Dorsolateral prefrontal cortex (tissue), 120 donors: ENCODE measurements at regions of chr1 and their contacts with region 1.

Region 1: GRCh38 chr1:84133479-84133878 is 10.6 kb upstream of the PRKACB start:
- DNase-seq: peak in 1 of 10 donors; percentile 7
- H3K4me3 ChIP-seq: no peak overlapping the region
- H3K27ac ChIP-seq: no peak overlapping the region
- H3K27me3 ChIP-seq: no peaks in the 10 kb centered on the region
- CTCF ChIP-seq: no peak

Region 2: GRCh38 chr1:84156210-84156621 is 22.7 kb after region 1 on chr1:
- intact Hi-C with region 1: no loop called
- DNase-seq: no peak
- H3K4me3 ChIP-seq: no peak overlapping the region
- H3K27ac ChIP-seq: peak overlapping the region in 8 of 59 donors; percentile 5 to 39 (median 23)
- H3K27me3 ChIP-seq: no peaks in the 10 kb centered on the region
- CTCF ChIP-seq: no peak

Region 3: GRCh38 chr1:84632673-84633434 is 499.4 kb after region 1 on chr1:
- intact Hi-C with region 1: no loop called
- DNase-seq: no peak
- H3K4me3 ChIP-seq: no peak overlapping the region
- H3K27ac ChIP-seq: no peak overlapping the region
- H3K27me3 ChIP-seq: no peaks in the 10 kb centered on the region
- CTCF ChIP-seq: no peak

Region 4: DNA sequence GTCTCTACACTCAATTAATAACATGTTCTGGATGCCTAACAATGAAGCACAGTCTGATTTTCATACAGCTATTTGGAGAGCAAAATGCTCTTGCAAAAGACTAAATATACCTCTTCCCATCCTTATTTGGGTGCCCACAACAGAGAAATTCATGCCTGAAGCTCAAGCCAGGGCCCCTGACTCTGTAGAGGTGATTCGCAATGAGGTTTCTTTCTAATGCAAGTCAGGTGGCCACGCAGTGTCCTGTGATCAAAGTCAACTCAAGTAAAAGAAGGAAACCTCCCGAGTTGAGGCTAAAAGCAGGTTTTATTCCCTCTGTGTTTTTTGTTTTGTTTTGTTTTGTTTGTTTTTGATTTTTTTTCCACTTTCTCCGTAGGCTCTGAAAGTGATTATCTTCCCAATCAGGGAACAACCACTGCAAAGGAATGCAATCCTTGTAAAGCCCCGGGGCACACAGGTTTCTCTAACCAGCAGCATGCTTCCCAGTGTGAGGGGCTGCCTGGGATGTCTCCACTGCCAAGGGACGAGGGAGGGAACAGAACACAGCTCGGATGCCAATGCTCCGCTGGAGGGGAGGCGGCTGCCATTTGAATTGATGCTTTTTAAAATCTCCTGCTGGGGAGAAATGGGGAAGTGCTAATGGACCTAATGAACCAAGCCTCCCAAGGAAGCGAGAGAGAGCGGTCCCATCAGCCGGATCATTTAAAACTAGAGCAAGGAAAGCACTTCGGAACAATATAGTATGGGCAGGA is 630.6 kb after region 1 on chr1:
- intact Hi-C with region 1: loop called (anchors 5 to 10 kb)
- DNase-seq: peak in 1 of 10 donors; percentile 34
- H3K4me3 ChIP-seq: peak overlapping the region in 20 of 59 donors; percentile 2 to 41 (median 12)
- H3K27ac ChIP-seq: peak overlapping the region in 11 of 59 donors; percentile 2 to 55 (median 38)
- H3K27me3 ChIP-seq: peaks cover 0 to 6% (median 0%) of the 10 kb centered on the region in 45 donors
- CTCF ChIP-seq: no peak